ENCODE measurements at regions of chr14 and their contacts with region 1.

Region 1: GRCh38 chr14:21244540-21244939 is 24.7 kb downstream of the HNRNPC start:
- DNase-seq: no peak
- ATAC-seq: peak; percentile 49
- H3K4me3 ChIP-seq: no peak overlapping the region
- H3K27ac ChIP-seq: no peak overlapping the region
- H3K4me1 ChIP-seq: peaks cover 73% of the 10 kb centered on the region
- H3K27me3 ChIP-seq: no peaks in the 10 kb centered on the region
- CTCF ChIP-seq: no peak
- EP300 ChIP-seq: no peak
- POLR2A ChIP-seq: peak; percentile 36 to 47; a peak in 2 of 4 replicates
- RAD21 ChIP-seq: no peak

Region 2: DNA sequence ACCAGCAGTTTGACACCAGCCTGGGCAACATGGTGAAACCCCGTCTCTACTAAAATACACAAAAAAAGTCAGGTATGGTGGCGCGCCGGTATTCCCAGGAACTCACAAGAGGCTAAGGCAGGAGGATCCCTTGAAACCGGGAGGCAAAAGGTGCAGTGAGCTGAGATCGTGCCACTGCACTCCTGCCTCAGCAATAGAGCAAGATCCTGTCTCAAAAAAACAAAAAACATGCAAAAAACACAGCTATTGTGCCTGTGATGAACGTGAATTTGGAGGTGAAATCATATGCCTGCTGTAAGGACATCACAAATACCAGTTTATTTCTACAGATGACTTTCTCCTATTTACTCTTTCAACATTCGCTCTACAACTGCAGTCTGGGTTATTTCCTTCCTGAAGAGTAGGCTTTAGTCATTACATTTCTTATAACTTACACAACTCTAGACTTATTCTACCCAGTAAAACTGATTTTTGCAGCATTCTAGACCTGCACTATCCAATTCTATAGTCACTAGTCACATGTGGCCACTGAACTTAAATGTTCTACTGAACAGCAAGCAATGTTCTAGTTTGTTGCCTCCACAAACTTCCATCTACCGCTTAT is 23.6 kb before region 1 on chr14:
- CTCF ChIA-PET with region 1: no interaction called
- POLR2A ChIA-PET with region 1: no interaction called
- in situ Hi-C with region 1: no loop called
- intact Hi-C with region 1: no loop called
- DNase-seq: no peak
- ATAC-seq: no peak
- H3K4me3 ChIP-seq: no peak overlapping the region
- H3K27ac ChIP-seq: no peak overlapping the region
- H3K4me1 ChIP-seq: peaks cover 43% of the 10 kb centered on the region
- H3K27me3 ChIP-seq: no peaks in the 10 kb centered on the region
- CTCF ChIP-seq: no peak
- EP300 ChIP-seq: no peak
- POLR2A ChIP-seq: peak in 1 of 2 experiments; percentile 27; a peak in 1 of 4 replicates
- RAD21 ChIP-seq: no peak

Region 3: DNA sequence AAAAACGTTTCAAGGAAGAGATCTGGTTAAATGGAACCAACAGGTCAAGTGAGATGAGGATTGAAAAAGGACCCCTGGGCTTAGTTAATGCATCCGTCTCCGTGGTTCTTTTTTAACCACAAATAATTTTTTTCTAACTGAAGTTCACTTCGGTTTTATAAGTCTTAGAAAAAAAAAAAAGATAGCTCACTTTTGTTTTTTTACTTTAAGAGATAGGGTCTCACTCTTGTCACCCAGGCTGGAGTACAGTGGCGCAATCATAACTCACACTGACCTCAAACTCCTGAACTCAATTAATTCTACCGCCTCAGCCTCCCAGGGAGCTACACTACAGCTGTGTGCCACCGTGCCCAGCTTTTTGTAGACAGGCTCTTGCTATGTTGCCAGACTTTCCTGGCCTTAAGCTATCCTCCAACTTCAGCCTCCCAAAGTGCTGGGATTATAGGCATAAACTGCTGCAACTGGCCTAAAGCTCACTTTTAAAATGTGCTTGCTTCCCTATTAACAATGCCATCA is 12.9 kb after region 1 on chr14:
- CTCF ChIA-PET with region 1: no interaction called
- POLR2A ChIA-PET with region 1: interaction called, 41 read pairs
- in situ Hi-C with region 1: no loop called
- intact Hi-C with region 1: no loop called
- DNase-seq: no peak
- ATAC-seq: peak; percentile 36
- H3K4me3 ChIP-seq: no peak overlapping the region
- H3K27ac ChIP-seq: peak overlapping the region; percentile 1
- H3K4me1 ChIP-seq: peaks cover 78% of the 10 kb centered on the region
- H3K27me3 ChIP-seq: no peaks in the 10 kb centered on the region
- CTCF ChIP-seq: no peak
- EP300 ChIP-seq: no peak
- POLR2A ChIP-seq: peak in 1 of 2 experiments; percentile 63; a peak in 2 of 4 replicates
- RAD21 ChIP-seq: no peak

Region 4: GRCh38 chr14:21263656-21264411 is 19.3 kb after region 1 on chr14:
- CTCF ChIA-PET with region 1: no interaction called
- POLR2A ChIA-PET with region 1: interaction called, 24 read pairs
- in situ Hi-C with region 1: no loop called
- intact Hi-C with region 1: no loop called
- DNase-seq: no peak
- ATAC-seq: peak; percentile 26
- H3K4me3 ChIP-seq: peak overlapping the region in 1 of 3 experiments; percentile 30; a peak in 1 of 6 replicates
- H3K27ac ChIP-seq: peak overlapping the region; percentile 19
- H3K4me1 ChIP-seq: peaks cover 76% of the 10 kb centered on the region
- H3K27me3 ChIP-seq: peaks cover 0 to 3% of the 10 kb centered on the region in 2 experiments; a peak in 2 of 5 replicates
- CTCF ChIP-seq: no peak
- EP300 ChIP-seq: no peak
- POLR2A ChIP-seq: peak in 1 of 2 experiments; percentile 70; a peak in 3 of 4 replicates
- RAD21 ChIP-seq: no peak

Region 5: DNA sequence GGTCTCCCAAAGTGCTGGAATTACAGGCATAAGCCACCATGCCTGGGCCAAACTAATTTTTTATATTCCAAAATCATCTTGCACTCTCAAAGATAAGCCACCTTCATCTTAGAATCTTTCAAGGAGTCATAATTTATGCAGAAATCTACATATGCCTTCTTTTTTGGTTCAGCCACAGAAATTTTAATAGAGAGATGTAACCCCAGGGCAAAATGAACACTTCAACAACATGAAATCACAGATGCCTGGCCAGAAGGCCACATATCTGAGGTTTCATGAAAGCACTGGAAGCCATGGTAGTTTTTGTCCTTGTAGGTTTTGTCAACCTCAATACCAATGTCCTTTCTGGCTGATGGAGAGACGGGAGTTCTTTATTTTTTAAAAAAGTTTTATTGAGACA is 129.4 kb after region 1 on chr14:
- CTCF ChIA-PET with region 1: no interaction called
- POLR2A ChIA-PET with region 1: no interaction called
- in situ Hi-C with region 1: no loop called
- intact Hi-C with region 1: no loop called
- DNase-seq: no peak
- ATAC-seq: no peak
- H3K4me3 ChIP-seq: no peak overlapping the region
- H3K27ac ChIP-seq: no peak overlapping the region
- H3K4me1 ChIP-seq: 0 out of 2 replicates have a peak, but pooled peaks cover 1% of the 10 kb centered on the region
- H3K27me3 ChIP-seq: no peaks in the 10 kb centered on the region
- CTCF ChIP-seq: no peak
- EP300 ChIP-seq: no peak
- POLR2A ChIP-seq: no peak
- RAD21 ChIP-seq: no peak

Measured in HepG2 (cell line).